Activated CD4-positive, alpha-beta memory T cell treated with anti-CD3 and anti-CD28 coated beads for 36 hours (primary cell): ENCODE measurements at regions of chr1 and their contacts with region 1.

Region 1: DNA sequence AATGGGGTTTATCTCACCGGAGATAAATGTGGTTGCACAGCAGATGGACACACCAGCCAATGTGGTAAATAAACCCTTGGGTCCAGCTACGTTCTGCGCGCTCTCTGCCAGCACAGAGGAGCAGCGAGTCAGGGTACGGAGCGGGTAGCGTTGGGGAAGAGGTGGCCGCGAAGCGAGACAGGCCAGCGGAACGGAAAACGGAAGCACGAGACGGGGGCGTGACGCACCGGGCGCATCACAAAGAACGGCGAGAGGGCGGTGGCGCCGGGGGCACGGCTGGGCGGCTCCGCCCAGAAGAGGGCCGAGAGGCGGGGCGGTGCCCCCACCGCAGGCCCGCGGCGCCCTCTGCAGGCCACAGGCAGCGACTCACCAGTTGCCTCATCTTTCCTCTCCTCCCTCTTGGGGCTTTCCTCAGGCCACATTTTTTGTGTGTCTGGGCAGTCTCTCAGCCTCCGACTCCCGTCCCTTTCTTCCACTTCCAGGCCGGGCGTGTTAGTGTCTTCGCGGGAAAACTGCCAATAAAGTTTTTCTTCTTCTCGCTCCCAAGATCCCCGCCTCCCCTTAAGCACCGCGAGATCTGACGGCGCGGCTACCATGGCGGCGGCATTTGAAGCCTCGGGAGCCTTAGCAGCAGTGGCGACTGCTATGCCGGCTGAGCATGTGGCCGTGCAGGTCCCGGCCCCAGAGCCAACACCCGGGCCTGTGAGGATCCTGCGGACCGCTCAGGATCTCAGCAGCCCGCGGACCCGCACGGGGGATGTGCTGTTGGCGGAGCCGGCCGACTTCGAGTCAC is at the start of gene DDX20:
- DNase-seq: peak; percentile 96
- H3K4me3 Mint-ChIP-seq: peak within 1 kb of the TSS; percentile 84
- H3K27ac Mint-ChIP-seq: peak within 1 kb of the TSS; percentile 97
- H3K4me1 Mint-ChIP-seq: peaks cover 35% of the 10 kb centered on the region
- H3K27me3 Mint-ChIP-seq: no peaks in the 10 kb centered on the region
- total RNA-seq, gene DDX20: 14.2 to 15.9 TPM

Region 2: GRCh38 chr1:111203681-111204200 is 551.8 kb before region 1 on chr1:
- CTCF ChIA-PET with region 1: no interaction called
- POLR2A ChIA-PET with region 1: no interaction called
- intact Hi-C with region 1: loop called (anchors 5 kb)
- DNase-seq: peak; percentile 93
- H3K4me3 Mint-ChIP-seq: peak overlapping the region; percentile 92
- H3K27ac Mint-ChIP-seq: peak overlapping the region; percentile 97
- H3K4me1 Mint-ChIP-seq: peaks cover 38% of the 10 kb centered on the region
- H3K27me3 Mint-ChIP-seq: no peaks in the 10 kb centered on the region

Region 3: DNA sequence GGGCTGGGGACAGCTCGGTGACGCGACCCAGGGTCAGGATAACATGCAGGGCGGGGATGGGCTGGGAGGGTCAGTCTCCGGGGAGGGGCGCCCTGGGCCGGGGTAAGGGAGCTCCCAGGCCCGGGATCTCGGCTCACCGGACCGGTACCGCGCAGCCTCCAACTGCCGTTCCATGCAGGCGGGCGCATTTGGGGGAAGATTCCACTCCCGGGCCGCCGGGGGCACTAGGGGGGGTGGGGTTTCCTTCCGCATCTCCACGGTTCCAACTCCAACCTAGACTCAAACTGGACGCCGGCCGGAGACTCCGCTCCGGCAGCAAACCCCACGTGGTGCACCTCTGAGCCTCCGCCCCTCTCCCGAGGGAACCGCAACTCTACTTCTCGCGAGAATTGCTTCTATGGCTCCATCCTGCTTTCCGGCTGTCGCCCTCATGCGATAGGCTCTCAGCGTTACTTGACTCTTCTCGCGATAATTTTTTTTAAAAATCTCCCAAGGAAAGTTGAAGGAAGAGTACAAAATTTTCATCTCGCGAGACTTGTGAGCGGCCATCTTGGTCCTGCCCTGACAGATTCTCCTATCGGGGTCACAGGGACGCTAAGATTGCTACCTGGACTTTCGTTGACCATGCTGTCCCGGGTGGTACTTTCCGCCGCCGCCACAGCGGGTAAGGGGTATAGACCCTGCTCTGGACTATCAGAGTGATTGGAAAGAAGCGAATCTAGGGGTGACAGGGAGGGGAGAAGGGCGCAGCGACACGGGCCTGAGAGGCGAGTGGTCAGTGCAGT is 306.4 kb before region 1 on chr1 and contains the starts of genes ATP5PB and WDR77:
- CTCF ChIA-PET with region 1: interaction called, 6 read pairs
- POLR2A ChIA-PET with region 1: interaction called, 3 read pairs
- intact Hi-C with region 1: loop called (anchors 1 kb)
- DNase-seq: peak; percentile 95
- H3K4me3 Mint-ChIP-seq: peak within 1 kb of the TSS; percentile 100
- H3K27ac Mint-ChIP-seq: peak within 1 kb of the TSS; percentile 94
- H3K4me1 Mint-ChIP-seq: peaks cover 73% of the 10 kb centered on the region
- H3K27me3 Mint-ChIP-seq: no peaks in the 10 kb centered on the region
- total RNA-seq, gene ATP5PB: 300 to 302 TPM
- total RNA-seq, gene WDR77: 44.6 to 48.4 TPM

Region 4: DNA sequence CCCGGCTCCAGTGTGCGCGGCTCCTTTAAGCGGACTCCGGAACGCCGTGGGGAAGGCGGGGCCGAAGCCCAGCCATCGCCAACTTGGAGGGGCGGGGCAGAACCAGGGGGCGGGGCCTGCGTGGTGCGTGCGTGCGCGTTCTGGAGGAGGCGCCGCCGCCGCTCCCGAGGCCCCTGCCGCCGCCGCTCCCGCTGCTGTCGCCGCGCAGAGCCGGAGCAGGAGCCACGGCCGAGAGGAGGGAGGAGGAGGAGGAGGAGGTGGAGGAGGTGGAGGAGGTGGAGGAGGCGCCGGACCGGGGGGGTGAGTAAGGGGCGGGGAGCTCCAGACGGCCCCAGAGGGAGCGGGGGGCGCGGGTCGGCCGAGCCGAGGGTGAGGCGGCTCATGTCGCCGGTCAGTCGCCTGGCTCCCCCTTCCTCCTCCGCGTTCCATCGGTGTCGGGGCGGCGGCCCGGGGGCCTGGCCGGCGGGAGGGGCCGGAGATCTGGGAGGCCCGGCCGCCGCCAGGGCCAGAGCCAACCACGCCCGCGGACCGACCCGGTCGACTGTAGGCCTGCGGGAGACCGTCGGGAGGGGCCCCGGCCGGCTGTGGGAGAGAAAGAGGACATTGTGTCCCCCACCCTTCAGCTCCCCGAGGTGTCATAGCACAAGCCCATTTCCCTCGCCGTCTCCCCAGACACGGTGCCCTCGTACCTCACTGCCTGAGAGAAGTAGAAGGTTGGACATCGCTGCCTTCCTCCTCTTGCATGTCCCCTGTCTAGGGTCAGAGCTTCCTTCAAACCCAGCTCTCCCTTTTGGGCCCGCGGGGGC is 135.7 kb before region 1 on chr1 and contains the start of gene RAP1A:
- CTCF ChIA-PET with region 1: interaction called, 5 read pairs
- POLR2A ChIA-PET with region 1: no interaction called
- intact Hi-C with region 1: loop called (anchors 5 kb)
- DNase-seq: peak; percentile 97
- H3K4me3 Mint-ChIP-seq: peak within 1 kb of the TSS; percentile 95
- H3K27ac Mint-ChIP-seq: peak within 1 kb of the TSS; percentile 97
- H3K4me1 Mint-ChIP-seq: peaks cover 65% of the 10 kb centered on the region
- H3K27me3 Mint-ChIP-seq: no peaks in the 10 kb centered on the region
- total RNA-seq, gene RAP1A: 292 to 294 TPM

Region 5: DNA sequence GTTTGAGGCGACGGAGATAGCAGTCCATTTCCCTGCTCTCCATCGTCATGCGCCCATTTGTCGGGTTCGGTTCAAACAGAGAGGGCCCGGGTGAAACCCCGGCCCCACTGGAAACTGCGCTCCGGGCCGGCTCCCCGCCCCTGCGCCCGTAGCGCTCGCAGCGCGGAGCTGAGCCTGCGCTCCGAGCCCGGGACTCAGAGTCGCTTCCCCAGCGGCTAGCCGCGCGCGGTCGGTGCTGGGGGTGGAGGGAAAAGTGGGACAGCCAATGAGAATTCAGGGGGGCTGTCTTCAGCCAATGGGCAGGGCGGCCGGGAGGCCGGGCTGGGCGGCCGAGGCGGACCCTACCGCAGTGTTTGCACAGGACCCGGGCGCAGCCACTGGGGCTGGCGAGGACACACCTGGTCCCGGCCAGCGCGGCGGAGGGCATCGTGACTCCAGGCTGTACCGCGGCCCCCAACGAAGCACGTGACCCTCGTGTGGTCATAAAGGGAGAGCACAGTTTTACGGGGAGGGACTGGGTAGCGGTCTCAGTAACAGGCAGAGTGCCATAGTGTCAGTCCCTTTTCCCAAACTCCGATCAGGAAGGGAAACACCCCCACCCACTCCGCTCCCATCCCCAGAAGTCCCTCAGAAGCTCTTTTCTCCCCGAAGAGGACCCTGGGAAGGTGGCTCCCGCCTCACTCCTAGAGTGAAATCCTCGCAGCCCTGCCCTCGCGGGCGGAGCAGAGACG is 16.2 kb before region 1 on chr1 and contains the start of gene INKA2:
- CTCF ChIA-PET with region 1: interaction called, 68 read pairs
- POLR2A ChIA-PET with region 1: interaction called, 12 read pairs
- intact Hi-C with region 1: loop called (anchors 1 kb)
- DNase-seq: peak; percentile 88
- H3K4me3 Mint-ChIP-seq: peak within 1 kb of the TSS; percentile 84
- H3K27ac Mint-ChIP-seq: no peak within 1 kb of the TSS
- H3K4me1 Mint-ChIP-seq: peaks cover 11% of the 10 kb centered on the region
- H3K27me3 Mint-ChIP-seq: peaks cover 28% of the 10 kb centered on the region
- total RNA-seq, gene INKA2: 1.4 to 2.3 TPM